Activated T-helper 2 cell treated with anti-CD3 and anti-CD28 coated beads, Interferon-gamma antibody, Interleukin-2, Interleukin-4, amounts not matched to agents 10 μg/mL and 5 μg/mL and 100 μg/mL, durations not matched to agents 14 hours and 24 hours and 36 hours (primary cell): ENCODE measurements at regions of chr11 and their contacts with region 1.

Region 1: GRCh38 chr11:46889689-46890475 is 28.5 kb downstream of the LRP4 start:
- DNase-seq: peak; percentile 46
- H3K4me3 Mint-ChIP-seq: no peak overlapping the region
- H3K27ac Mint-ChIP-seq: no peak overlapping the region
- H3K4me1 Mint-ChIP-seq: peaks cover 5% of the 10 kb centered on the region
- H3K27me3 Mint-ChIP-seq: peaks cover 2% of the 10 kb centered on the region

Region 2: DNA sequence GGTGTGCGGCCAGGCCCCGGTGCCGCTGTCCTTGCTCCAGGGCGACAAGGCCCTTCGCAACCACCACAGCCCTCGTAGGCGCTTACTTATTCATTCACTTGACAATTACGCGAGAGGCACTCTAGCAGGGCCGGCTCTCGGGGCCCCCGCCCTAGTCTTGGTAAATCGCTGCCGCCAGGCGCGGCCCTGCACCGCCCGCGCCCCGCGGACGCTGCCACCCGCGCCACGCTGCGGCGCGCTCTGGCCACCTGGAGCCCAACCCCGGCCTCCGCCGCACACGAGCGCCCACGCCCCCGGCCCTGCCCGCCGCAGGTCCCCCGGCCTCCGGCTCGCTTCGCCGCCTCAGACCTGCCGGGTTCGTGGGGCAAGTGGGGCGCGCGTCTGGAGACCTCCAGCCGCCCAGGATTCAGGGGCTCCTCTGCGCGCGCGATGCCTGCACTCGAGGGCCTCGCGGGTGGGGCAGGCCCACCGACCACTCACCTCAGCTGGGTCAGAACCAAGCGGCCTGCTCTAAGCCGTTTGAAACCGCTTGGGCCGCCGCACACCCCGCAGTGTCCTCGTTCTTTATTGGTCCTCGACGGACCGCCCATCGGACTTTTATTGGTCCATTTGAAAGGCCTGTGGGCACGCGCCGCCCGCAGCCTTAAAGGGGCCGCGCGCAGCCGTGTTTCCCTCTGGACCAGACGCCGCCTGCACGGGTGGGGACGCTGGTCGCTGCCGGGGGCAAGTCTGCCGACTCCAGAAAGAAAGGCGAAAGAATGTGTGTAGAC is 44.0 kb before region 1 on chr11 and contains the start of gene CKAP5:
- intact Hi-C with region 1: no loop called
- DNase-seq: peak; percentile 83
- H3K4me3 Mint-ChIP-seq: peak within 1 kb of the TSS; percentile 96
- H3K27ac Mint-ChIP-seq: peak within 1 kb of the TSS; percentile 97
- H3K4me1 Mint-ChIP-seq: peaks cover 35% of the 10 kb centered on the region
- H3K27me3 Mint-ChIP-seq: no peaks in the 10 kb centered on the region
- total RNA-seq, gene CKAP5: 127 and 136 TPM in 2 replicates

Region 3: DNA sequence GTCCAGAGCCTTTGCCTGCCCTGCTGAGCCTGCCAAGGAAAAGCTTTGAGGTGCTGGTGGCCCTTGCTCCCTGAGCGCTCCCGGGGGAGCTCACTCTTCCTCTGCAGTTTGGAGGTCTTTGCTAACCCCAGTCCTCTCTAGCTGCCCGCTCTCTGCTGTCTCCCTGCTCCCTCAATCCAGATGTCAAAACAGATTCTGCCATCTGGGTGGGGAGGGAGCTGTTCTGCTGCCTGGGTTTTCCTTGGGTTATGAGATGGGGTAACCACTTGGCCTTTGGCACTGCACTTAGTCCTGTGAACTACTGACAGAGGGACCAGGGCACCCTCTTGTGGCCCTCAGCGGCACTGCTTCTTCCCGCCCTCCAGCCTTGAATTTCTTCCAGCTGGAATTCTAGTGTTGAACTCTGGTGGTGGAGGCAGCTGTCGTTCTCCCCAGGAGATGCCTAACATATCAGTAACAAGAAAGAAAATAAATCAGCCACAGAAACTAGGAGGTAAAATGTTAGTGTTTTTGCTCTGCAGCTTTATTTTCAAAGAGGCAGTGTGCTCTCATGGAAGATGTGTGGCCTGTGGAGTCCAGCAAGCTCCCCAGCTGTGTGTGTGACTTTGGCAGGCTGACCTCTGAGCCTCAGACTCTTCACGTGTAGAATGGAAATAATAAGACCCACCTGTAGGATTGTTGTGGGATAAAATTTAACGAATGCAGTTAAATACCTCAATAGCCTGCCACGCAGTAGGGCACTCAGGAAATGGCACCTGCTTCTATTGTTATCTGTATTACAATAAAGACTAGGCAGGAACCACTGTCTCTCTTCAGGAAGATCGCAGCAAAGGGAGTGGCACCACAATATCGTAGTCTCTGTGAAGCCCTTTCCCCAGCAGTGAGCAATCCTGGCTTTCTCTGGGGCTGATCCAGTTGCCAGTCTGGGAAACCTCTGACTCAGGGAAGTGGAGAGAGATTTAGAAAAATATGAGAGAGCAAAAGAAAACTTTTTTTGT is 263.4 kb after region 1 on chr11:
- intact Hi-C with region 1: loop called (anchors 1 kb)
- DNase-seq: peak; percentile 40
- H3K4me3 Mint-ChIP-seq: no peak overlapping the region
- H3K27ac Mint-ChIP-seq: no peak overlapping the region
- H3K4me1 Mint-ChIP-seq: peaks cover 18% of the 10 kb centered on the region
- H3K27me3 Mint-ChIP-seq: no peaks in the 10 kb centered on the region